HCT116 (cell line): ENCODE measurements at regions of chr18 and their contacts with region 1.

Region 1: DNA sequence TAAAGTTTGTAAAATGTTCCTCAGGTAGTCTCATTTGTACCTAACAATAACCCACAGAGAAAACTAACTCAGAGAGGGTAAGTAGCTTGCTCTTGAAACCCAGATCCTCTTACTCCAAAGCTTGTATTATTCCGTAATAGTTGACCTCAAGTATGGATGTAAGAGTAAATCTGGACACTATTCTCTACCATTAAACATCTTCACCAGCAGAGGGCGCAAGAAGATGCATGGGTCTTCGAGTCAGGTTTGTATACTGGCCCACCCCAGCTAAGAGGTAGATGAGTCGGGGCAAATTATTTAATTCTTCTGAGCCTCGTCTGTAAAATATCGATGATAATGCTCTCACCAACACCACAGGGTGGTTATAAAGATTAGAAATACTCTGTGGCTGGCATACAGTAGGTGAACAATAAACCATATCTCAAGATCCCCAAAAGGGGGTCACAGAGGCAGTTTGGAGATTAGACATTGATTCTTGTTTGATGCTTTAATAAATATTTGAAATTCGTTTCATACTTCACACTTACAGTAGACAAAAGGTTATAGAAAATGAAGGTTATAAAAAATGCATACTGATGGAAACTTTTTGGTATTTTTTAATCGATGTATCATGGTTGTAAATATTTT is 3.5 kb upstream of the CABLES1 start:
- DNase-seq: peak; percentile 73
- ATAC-seq: peak; percentile 43
- H3K4me3 ChIP-seq: no peak overlapping the region
- H3K27ac ChIP-seq: no peak overlapping the region
- H3K4me1 ChIP-seq: peaks cover 18 to 34% of the 10 kb centered on the region in 2 experiments
- H3K27me3 ChIP-seq: no peaks in the 10 kb centered on the region
- CTCF ChIP-seq: peak; percentile 71 to 83 (median 77)
- POLR2A ChIP-seq: no peak
- RAD21 ChIP-seq: peak; percentile 82

Region 2: DNA sequence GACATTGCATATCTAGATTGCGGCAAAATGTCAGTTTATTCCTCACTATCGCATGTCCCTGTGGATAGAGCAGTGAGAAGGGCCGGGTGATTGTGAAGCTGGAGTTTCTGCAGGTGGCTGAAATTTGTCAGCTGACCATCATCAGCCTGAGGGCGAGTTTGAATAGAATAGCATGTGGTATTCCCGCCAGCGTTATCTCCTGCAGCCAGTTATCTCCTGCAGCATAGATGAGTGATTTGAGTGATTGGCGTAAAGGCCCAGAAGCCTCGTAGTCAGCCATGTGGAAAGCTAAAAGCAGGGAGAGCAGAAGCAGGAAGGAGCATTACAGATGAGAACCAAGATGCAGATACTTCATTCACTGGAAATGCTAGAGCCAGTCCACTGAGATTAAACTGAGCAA is 68.9 kb after region 1 on chr18:
- CTCF ChIA-PET with region 1: no interaction called
- POLR2A ChIA-PET with region 1: no interaction called
- RAD21 ChIA-PET with region 1: no interaction called
- intact Hi-C with region 1: no loop called
- DNase-seq: no peak
- ATAC-seq: no peak
- H3K4me3 ChIP-seq: no peak overlapping the region
- H3K27ac ChIP-seq: no peak overlapping the region
- H3K4me1 ChIP-seq: no peaks in the 10 kb centered on the region
- H3K27me3 ChIP-seq: no peaks in the 10 kb centered on the region
- CTCF ChIP-seq: no peak
- POLR2A ChIP-seq: no peak
- RAD21 ChIP-seq: no peak

Region 3: GRCh38 chr18:23377669-23378301 is 246.0 kb after region 1 on chr18:
- CTCF ChIA-PET with region 1: interaction called, 31 read pairs
- POLR2A ChIA-PET with region 1: interaction called, 3 read pairs
- RAD21 ChIA-PET with region 1: interaction called, 4 read pairs
- intact Hi-C with region 1: loop called (anchors 1 kb)
- DNase-seq: peak; percentile 26
- ATAC-seq: peak; percentile 58
- H3K4me3 ChIP-seq: no peak overlapping the region
- H3K27ac ChIP-seq: peak overlapping the region; percentile 10; the same call in 1 of the 2 replicates
- H3K4me1 ChIP-seq: peaks cover 16 to 22% of the 10 kb centered on the region in 2 experiments
- H3K27me3 ChIP-seq: no peaks in the 10 kb centered on the region
- CTCF ChIP-seq: no peak
- POLR2A ChIP-seq: no peak
- RAD21 ChIP-seq: no peak